ENCODE measurements at regions of chr1 and their contacts with region 1.

Region 1: DNA sequence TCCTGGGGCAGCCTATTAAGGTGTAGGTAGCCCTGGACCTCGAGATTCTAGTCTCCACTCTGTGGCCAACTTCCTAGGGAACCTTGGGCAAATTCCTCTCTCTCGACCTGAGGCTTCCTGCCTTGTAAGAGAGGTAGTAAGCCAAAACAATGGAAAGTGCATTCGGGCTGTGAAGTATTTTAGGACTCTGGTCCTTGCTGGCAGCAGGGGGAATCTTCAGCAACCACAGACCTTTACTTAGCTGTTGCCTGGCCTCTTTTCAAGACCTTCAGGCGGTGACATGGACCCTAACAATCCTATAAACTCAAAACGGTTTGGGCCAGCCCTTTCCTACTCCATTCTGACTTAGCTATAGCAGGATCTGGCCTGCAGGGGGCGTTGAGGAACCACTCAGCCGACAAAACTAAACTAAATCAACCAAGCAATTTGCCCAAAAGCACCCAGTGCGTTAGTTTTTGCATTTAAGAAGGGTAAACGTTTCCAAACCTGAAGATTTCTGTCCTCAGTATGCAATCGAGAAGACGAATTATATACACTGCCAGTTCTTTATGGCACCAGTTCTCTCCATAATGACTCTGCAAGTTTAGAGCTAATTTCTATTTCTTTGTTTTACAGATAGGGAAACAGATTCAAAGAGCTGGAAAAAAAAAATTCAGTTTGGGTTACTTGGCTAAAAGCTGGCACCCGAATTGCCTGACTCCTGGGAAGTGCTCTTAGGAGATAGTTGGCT is 10.9 kb upstream of the SESN2 start:
- DNase-seq: peak; percentile 64
- ATAC-seq: peak; percentile 65
- H3K4me3 ChIP-seq: peak overlapping the region; percentile 28 to 45
- H3K27ac ChIP-seq: peak overlapping the region; percentile 74
- H3K4me1 ChIP-seq: peaks cover 33 to 35% of the 10 kb centered on the region in 2 experiments
- H3K27me3 ChIP-seq: no peaks in the 10 kb centered on the region
- CTCF ChIP-seq: peak; percentile 84 to 99 (median 95)
- POLR2A ChIP-seq: no peak
- RAD21 ChIP-seq: peak; percentile 95

Region 2: GRCh38 chr1:28144203-28145135 is 104.0 kb before region 1 on chr1:
- CTCF ChIA-PET with region 1: no interaction called
- POLR2A ChIA-PET with region 1: no interaction called
- RAD21 ChIA-PET with region 1: no interaction called
- intact Hi-C with region 1: no loop called
- DNase-seq: no peak
- ATAC-seq: 0 out of 2 replicates have a peak, but pooled peaks have one; percentile 38
- H3K4me3 ChIP-seq: no peak overlapping the region
- H3K27ac ChIP-seq: no peak overlapping the region
- H3K4me1 ChIP-seq: peaks cover 0 to 8% of the 10 kb centered on the region in 2 experiments; a peak in 2 of 4 replicates
- H3K27me3 ChIP-seq: no peaks in the 10 kb centered on the region
- CTCF ChIP-seq: no peak
- POLR2A ChIP-seq: no peak
- RAD21 ChIP-seq: no peak

Region 3: DNA sequence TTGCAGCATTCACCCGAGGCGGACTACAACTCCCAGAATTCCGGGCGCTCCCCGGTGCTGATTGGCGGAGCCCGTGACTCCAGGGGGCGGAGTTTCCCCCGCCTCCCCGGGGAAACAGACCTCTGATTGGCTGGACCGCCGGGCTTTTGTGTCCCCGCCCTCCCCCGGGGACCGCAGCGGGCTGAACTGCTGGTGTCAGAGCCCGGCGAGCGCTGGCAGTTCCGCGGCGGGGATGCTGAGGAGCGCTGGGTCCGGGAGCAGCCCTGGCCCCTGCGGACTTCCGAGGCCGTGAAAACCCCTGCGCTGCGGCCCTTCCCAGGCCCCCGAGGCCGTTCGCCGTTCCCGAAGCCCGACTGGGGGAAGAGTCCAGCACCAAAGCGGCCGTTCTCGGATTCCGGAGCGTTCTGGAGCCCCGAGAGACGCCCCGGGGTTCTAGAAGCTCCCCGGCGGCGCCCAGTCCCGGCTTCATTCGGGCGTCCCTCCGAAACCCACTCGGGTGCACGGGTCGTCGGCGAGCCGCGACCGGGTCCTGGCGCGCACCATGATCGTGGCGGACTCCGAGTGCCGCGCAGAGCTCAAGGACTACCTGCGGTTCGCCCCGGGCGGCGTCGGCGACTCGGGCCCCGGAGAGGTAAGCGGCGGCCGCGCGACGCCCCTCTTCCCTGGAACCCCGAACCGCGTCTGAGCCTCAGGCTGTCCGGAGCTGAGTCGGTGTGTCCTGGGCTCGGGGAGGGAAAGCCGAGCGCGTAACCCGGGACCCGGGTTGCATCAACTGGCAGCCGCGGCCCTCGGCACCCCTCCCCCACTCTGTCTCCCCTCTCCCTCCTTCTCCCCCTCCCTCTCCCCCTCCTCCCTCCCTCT is 11.1 kb after region 1 on chr1 and contains the start of gene SESN2:
- CTCF ChIA-PET with region 1: interaction called, 26 read pairs
- POLR2A ChIA-PET with region 1: interaction called, 45 read pairs
- RAD21 ChIA-PET with region 1: interaction called, 3 to 4 read pairs
- intact Hi-C with region 1: no loop called
- DNase-seq: peak; percentile 96
- ATAC-seq: peak; percentile 93
- H3K4me3 ChIP-seq: peak within 1 kb of the TSS; percentile 91 to 93
- H3K27ac ChIP-seq: peak within 1 kb of the TSS; percentile 81
- H3K4me1 ChIP-seq: peaks cover 12 to 21% of the 10 kb centered on the region in 2 experiments
- H3K27me3 ChIP-seq: no peaks in the 10 kb centered on the region
- CTCF ChIP-seq: no peak
- POLR2A ChIP-seq: peak; percentile 86
- RAD21 ChIP-seq: no peak
- total RNA-seq, gene SESN2: 36.8 TPM

Region 4: GRCh38 chr1:28354121-28354520 is 105.7 kb after region 1 on chr1:
- CTCF ChIA-PET with region 1: interaction called, 9 read pairs
- POLR2A ChIA-PET with region 1: interaction called, 16 read pairs
- RAD21 ChIA-PET with region 1: interaction called in 1 of 2 experiments, 3 read pairs
- intact Hi-C with region 1: loop called (anchors 5 kb)
- DNase-seq: no peak
- ATAC-seq: no peak
- H3K4me3 ChIP-seq: no peak overlapping the region
- H3K27ac ChIP-seq: no peak overlapping the region; the same call in 1 of the 2 replicates
- H3K4me1 ChIP-seq: peaks cover 27 to 41% of the 10 kb centered on the region in 2 experiments
- H3K27me3 ChIP-seq: no peaks in the 10 kb centered on the region
- CTCF ChIP-seq: no peak
- POLR2A ChIP-seq: no peak
- RAD21 ChIP-seq: no peak

Region 5: GRCh38 chr1:28369371-28370238 is 121.2 kb after region 1 on chr1 and contains the start of gene PHACTR4:
- CTCF ChIA-PET with region 1: interaction called, 73 read pairs
- POLR2A ChIA-PET with region 1: interaction called, 28 read pairs
- RAD21 ChIA-PET with region 1: interaction called, 14 to 24 read pairs
- intact Hi-C with region 1: loop called (anchors 1 kb)
- DNase-seq: peak; percentile 92
- ATAC-seq: peak; percentile 92
- H3K4me3 ChIP-seq: peak within 1 kb of the TSS; percentile 87 to 93
- H3K27ac ChIP-seq: peak within 1 kb of the TSS; percentile 92
- H3K4me1 ChIP-seq: peaks cover 52 to 76% of the 10 kb centered on the region in 2 experiments
- H3K27me3 ChIP-seq: no peaks in the 10 kb centered on the region
- CTCF ChIP-seq: no peak
- POLR2A ChIP-seq: peak; percentile 93
- RAD21 ChIP-seq: no peak
- total RNA-seq, gene PHACTR4: 36.0 TPM

Region 6: GRCh38 chr1:28510665-28511440 is 262.4 kb after region 1 on chr1:
- CTCF ChIA-PET with region 1: interaction called, 7 read pairs
- POLR2A ChIA-PET with region 1: interaction called, 13 read pairs
- RAD21 ChIA-PET with region 1: no interaction called
- intact Hi-C with region 1: loop called (anchors 5 kb)
- DNase-seq: no peak
- ATAC-seq: peak; percentile 24
- H3K4me3 ChIP-seq: no peak overlapping the region
- H3K27ac ChIP-seq: peak overlapping the region; percentile 97
- H3K4me1 ChIP-seq: peaks cover 19 to 65% of the 10 kb centered on the region in 2 experiments
- H3K27me3 ChIP-seq: no peaks in the 10 kb centered on the region
- CTCF ChIP-seq: no peak
- POLR2A ChIP-seq: peak; percentile 69
- RAD21 ChIP-seq: no peak

Measured in HCT116 (cell line).